HepG2 (cell line): ENCODE measurements at regions of chr2 and their contacts with region 1.

Region 1: GRCh38 chr2:33275689-33276444 is 200.6 kb upstream of the RASGRP3 start:
- DNase-seq: peak; percentile 78
- ATAC-seq: peak; percentile 95
- H3K4me3 ChIP-seq: no peak overlapping the region
- H3K27ac ChIP-seq: no peak overlapping the region
- H3K4me1 ChIP-seq: peaks cover 12% of the 10 kb centered on the region
- H3K27me3 ChIP-seq: 0 out of 5 replicates have a peak, but pooled peaks cover 0 to 5% of the 10 kb centered on the region in 2 experiments
- CTCF ChIP-seq: no peak
- EP300 ChIP-seq: peak in 1 of 2 experiments; percentile 82; a peak in 1 of 4 replicates
- POLR2A ChIP-seq: no peak
- RAD21 ChIP-seq: no peak

Region 2: DNA sequence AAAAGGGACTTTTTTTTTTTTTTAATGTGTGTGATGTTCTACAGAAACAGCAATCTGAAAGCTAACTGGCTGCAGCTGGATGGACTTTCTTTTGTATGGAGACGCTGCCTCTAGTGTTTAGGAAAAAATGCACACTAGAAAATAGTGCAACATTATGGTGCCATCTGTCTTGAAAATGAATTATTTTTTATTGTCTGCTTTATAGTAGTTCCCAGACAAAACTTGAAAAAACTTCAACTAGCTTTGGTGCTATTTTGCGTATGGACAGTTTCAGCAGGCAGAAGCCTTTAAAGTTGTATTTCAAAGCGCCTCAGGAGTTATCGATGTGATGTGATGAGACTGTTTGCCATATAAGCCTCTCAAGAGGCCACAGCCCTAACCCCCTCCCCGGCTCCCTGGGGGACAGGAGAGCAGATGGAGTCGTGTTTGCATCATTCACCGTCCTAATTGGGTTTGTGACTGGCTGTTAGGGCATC is 242.2 kb before region 1 on chr2:
- CTCF ChIA-PET with region 1: no interaction called
- POLR2A ChIA-PET with region 1: no interaction called
- in situ Hi-C with region 1: no loop called
- intact Hi-C with region 1: loop called (anchors 5 kb)
- DNase-seq: no peak
- ATAC-seq: peak; percentile 60; the same call in 2 of the 3 replicates
- H3K4me3 ChIP-seq: no peak overlapping the region
- H3K27ac ChIP-seq: no peak overlapping the region
- H3K4me1 ChIP-seq: no peaks in the 10 kb centered on the region
- H3K27me3 ChIP-seq: peaks cover 0 to 11% of the 10 kb centered on the region in 2 experiments; a peak in 1 of 5 replicates
- CTCF ChIP-seq: peak; percentile 31; the same call in 1 of the 2 replicates
- EP300 ChIP-seq: no peak
- POLR2A ChIP-seq: no peak
- RAD21 ChIP-seq: no peak